Activated T-helper 1 cell treated with anti-CD3 and anti-CD28 coated beads, Interleukin-12 subunit alpha, Interleukin-12 subunit beta, Interleukin-2, Interleukin-4 antibody, amounts not matched to agents 30 ng/mL and 10 ng/mL and 1 ng/mL, durations not matched to agents 14 hours and 24 hours and 36 hours (primary cell): ENCODE measurements at regions of chr10 and their contacts with region 1.

Region 1: DNA sequence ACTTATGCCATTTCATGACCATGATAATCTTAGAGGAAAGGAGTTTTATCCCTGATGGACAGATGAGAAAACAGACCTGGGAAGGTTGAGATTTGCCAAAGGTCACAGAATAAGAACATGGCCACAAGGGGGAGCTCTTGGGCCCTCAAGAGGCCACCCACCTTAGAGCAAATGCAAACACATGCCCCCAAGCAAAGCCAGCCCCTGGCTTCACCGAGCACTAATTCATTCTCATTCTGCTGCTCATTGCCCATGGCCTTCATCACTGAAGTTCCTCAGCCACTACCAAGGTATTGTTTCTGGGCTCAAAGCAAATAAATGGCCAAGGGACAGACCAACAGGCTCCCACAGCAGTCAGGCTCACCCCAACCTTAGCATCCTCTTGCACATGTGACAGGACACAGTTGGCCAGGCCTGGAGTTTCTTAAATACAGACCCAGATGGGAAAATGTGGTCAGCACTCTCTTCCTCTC is 44.2 kb downstream of the PDLIM1 start:
- DNase-seq: peak; percentile 37
- H3K4me3 Mint-ChIP-seq: no peak overlapping the region
- H3K27ac Mint-ChIP-seq: no peak overlapping the region
- H3K4me1 Mint-ChIP-seq: peaks cover 33% of the 10 kb centered on the region
- H3K27me3 Mint-ChIP-seq: no peaks in the 10 kb centered on the region

Region 2: GRCh38 chr10:94963901-94964300 is 282.7 kb before region 1 on chr10:
- intact Hi-C with region 1: loop called (anchors 10 kb)
- DNase-seq: no peak
- H3K4me3 Mint-ChIP-seq: no peak overlapping the region
- H3K27ac Mint-ChIP-seq: no peak overlapping the region
- H3K4me1 Mint-ChIP-seq: no peaks in the 10 kb centered on the region
- H3K27me3 Mint-ChIP-seq: no peaks in the 10 kb centered on the region

Region 3: GRCh38 chr10:95183271-95184230 is 63.1 kb before region 1 on chr10:
- intact Hi-C with region 1: loop called (anchors 1 kb)
- DNase-seq: peak; percentile 74
- H3K4me3 Mint-ChIP-seq: peak overlapping the region; percentile 80
- H3K27ac Mint-ChIP-seq: peak overlapping the region; percentile 78
- H3K4me1 Mint-ChIP-seq: peaks cover 5% of the 10 kb centered on the region
- H3K27me3 Mint-ChIP-seq: peaks cover 33% of the 10 kb centered on the region

Region 4: GRCh38 chr10:95236068-95236903 is 10.3 kb before region 1 on chr10:
- intact Hi-C with region 1: loop called (anchors 1 kb)
- DNase-seq: no peak
- H3K4me3 Mint-ChIP-seq: peak overlapping the region; percentile 46
- H3K27ac Mint-ChIP-seq: peak overlapping the region; percentile 89
- H3K4me1 Mint-ChIP-seq: peaks cover 26% of the 10 kb centered on the region
- H3K27me3 Mint-ChIP-seq: peaks cover 3% of the 10 kb centered on the region

Region 5: GRCh38 chr10:95363303-95363912 is 116.8 kb after region 1 on chr10:
- intact Hi-C with region 1: loop called (anchors 1 kb)
- DNase-seq: peak; percentile 47
- H3K4me3 Mint-ChIP-seq: no peak overlapping the region
- H3K27ac Mint-ChIP-seq: no peak overlapping the region
- H3K4me1 Mint-ChIP-seq: no peaks in the 10 kb centered on the region
- H3K27me3 Mint-ChIP-seq: peaks cover 6% of the 10 kb centered on the region

Region 6: DNA sequence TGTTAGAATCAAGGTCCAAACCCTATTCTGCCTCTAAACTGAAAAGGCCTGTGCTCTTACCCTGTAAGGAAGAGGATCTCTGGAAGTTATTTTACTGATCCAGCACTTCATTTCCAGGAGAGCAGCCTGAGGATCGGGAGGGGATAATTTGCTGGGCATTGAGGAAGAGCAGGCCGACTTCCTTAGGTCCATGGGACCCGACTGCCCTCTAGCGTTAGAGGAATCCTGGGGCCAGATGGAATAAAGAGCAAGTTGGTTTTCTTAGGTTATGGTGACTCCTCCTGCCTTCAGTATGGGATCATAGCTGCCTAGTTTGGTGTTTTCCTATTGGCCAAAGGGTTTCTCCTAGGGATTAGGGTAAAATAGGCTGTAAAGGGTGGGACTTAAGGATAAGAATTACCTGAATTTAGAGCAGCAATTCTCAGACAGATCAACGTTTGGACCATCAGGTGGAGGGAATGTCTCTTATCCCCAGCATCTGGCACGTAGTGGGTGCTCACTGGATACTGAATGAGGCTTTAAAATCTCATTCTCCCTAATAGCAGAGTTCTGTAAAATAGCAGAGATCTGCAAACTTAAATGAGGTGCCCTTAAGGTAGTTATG is 354.6 kb after region 1 on chr10:
- intact Hi-C with region 1: loop called (anchors 5 kb)
- DNase-seq: peak; percentile 17
- H3K4me3 Mint-ChIP-seq: no peak overlapping the region
- H3K27ac Mint-ChIP-seq: no peak overlapping the region
- H3K4me1 Mint-ChIP-seq: no peaks in the 10 kb centered on the region
- H3K27me3 Mint-ChIP-seq: peaks cover 7% of the 10 kb centered on the region